H1 (cell line): ENCODE measurements at regions of chr18 and their contacts with region 1.

Region 1: DNA sequence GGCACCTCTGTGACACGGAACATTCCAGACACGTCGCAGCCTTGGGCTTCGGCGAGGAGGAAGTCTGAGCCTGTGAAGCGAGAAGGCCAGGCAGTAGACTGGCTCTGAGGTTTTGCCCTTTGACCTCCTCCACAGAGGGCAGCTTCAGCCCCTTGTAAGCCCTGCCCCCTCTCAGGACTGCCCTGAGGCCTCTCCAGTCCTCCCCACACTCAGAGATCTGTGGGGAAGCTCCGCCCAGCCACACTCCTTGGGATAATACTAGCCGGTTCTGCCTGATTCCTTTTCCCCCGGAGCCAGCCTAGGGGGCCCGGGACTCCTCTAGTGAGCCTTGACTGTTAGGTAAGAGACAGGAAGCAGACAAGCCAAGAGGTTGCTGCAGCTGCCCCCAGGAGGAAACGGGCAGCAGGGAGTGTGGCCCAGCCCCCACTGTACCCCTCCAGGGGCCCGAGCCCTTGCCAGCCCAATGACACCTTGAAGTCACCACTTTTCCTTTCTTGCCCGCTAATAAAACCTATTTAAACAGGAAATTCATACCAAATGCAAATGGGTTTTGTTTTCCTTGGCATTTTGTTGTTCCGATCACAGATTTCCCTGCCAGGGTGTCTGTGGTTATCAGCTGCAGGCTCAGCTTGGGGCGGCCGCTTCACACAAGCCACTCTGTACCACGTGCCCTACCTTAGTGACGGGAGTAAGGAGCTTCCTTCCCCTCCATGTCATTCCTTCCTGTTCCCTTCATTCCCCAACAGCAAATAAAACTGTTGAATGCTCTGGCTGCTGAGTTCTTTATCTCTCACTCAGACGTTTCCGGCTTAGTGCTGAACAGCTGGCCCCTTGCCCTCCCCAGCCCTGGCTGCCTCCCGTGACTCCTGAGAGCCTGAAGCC is 124.7 kb downstream of the CABLES1 start:
- DNase-seq: peak in 1 of 2 experiments; percentile 73
- H3K4me3 ChIP-seq: 0 out of 8 replicates have a peak overlapping the region, but pooled peaks of 2 of the 4 experiments have one; percentile 2 to 7
- H3K27ac ChIP-seq: peak overlapping the region; percentile 64
- H3K4me1 ChIP-seq: peaks cover 16 to 23% (median 19%) of the 10 kb centered on the region in 4 experiments
- H3K27me3 ChIP-seq: no peaks in the 10 kb centered on the region
- CTCF ChIP-seq: no peak
- EP300 ChIP-seq: peak in 1 of 2 experiments; percentile 18; a peak in 1 of 3 replicates
- POLR2A ChIP-seq: no peak; a peak in 1 of 3 replicates
- RAD21 ChIP-seq: peak in 1 of 2 experiments; percentile 14; a peak in 1 of 4 replicates

Region 2: DNA sequence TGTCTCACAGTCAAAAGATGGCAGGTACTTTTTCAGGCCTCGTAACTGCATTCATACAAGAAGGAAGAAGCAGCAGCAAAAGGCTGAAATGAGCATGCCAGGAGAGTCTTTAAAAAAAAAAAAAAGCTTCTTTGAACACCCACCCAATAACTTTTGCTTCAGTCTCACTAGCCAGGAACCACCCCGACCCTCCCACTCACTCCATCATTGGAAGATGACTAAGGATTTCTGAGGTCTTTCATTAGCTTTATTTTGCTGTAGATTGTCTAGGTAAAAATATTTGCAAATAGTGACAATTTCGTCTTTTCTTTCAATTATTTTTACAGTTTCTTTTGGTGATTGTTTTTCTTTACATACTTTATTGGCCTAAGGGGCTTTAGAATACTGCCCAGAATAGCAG is 288.9 kb before region 1 on chr18:
- CTCF ChIA-PET with region 1: no interaction called
- POLR2A ChIA-PET with region 1: no interaction called
- DNase-seq: no peak
- H3K4me3 ChIP-seq: no peak overlapping the region
- H3K27ac ChIP-seq: no peak overlapping the region
- H3K4me1 ChIP-seq: no peaks in the 10 kb centered on the region
- H3K27me3 ChIP-seq: no peaks in the 10 kb centered on the region
- CTCF ChIP-seq: no peak
- EP300 ChIP-seq: no peak
- POLR2A ChIP-seq: no peak
- RAD21 ChIP-seq: no peak

Region 3: GRCh38 chr18:23020555-23021294 is 239.2 kb before region 1 on chr18:
- CTCF ChIA-PET with region 1: no interaction called
- POLR2A ChIA-PET with region 1: no interaction called
- DNase-seq: no peak
- H3K4me3 ChIP-seq: no peak overlapping the region
- H3K27ac ChIP-seq: no peak overlapping the region
- H3K4me1 ChIP-seq: no peaks in the 10 kb centered on the region
- H3K27me3 ChIP-seq: no peaks in the 10 kb centered on the region
- CTCF ChIP-seq: no peak
- EP300 ChIP-seq: no peak
- POLR2A ChIP-seq: no peak
- RAD21 ChIP-seq: no peak

Region 4: DNA sequence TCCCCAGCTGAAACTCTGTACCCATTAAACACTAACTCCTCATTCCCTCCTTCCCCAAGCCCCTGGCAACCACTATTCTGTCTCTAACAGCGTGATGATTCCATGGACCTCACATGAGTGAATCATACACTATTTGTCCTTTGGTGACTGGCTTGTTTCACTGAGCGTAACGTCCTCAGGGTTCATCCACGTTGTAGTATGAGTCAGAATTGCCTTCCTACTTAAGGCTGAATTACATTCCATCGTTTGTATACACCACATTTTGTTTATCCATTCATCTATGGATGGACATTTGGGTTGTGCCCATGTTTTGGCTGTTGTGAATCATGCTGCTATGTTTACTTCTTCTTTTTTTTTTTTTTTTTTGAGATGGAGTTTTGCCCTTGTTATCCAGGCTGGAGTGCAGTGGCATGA is 144.3 kb before region 1 on chr18:
- CTCF ChIA-PET with region 1: no interaction called
- POLR2A ChIA-PET with region 1: no interaction called
- DNase-seq: no peak
- H3K4me3 ChIP-seq: no peak overlapping the region
- H3K27ac ChIP-seq: no peak overlapping the region
- H3K4me1 ChIP-seq: 0 out of 7 replicates have a peak, but pooled peaks cover 0 to 2% (median 0%) of the 10 kb centered on the region in 4 experiments
- H3K27me3 ChIP-seq: peaks cover 0 to 3% (median 0%) of the 10 kb centered on the region in 4 experiments; a peak in 1 of 7 replicates
- CTCF ChIP-seq: no peak
- EP300 ChIP-seq: no peak
- POLR2A ChIP-seq: no peak
- RAD21 ChIP-seq: no peak

Region 5: DNA sequence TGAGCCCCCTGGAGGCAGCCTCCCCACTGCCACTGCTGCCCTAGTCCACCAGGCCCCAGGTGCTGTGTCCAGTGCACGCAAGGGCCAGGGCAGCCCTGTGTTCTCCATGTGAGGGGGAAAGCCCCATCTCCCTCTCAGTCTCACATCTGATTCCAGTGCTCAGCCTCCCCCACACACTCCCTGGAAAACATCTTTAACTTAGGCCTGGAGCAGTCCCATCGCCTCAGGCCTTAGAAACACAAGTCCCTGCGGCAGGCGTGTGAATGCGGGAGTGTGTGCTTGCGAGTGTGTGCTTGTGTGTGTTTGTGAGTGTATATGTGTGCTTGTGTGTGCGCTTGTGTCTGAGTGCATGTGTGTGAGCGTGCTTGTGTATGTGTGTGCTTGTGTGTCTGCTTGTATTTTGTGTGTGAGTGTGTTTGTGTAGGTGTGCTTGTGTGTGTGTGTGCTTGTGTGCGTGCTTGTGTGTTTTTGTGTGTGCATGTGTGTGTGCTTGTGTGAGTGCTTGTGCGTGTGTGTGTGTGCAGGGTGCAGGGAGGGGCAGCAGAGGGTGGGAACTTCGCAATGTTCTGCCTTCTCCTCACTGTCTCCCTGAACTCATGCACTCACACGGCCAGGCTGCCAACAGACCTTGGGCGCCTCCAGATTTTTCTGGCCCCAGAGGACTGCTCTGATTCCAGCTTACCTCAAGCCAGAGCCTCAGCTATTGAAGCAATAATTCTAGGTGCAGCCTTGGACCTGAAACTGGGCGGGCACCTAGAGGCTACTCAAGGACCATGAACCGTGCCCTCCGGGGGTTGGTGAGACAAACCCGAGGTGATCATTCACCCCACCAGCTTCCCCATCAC is 14.9 kb after region 1 on chr18:
- CTCF ChIA-PET with region 1: interaction called, 18 read pairs
- POLR2A ChIA-PET with region 1: interaction called, 7 read pairs
- DNase-seq: no peak
- H3K4me3 ChIP-seq: no peak overlapping the region
- H3K27ac ChIP-seq: no peak overlapping the region
- H3K4me1 ChIP-seq: 0 out of 7 replicates have a peak, but pooled peaks cover 0 to 2% (median 0%) of the 10 kb centered on the region in 4 experiments
- H3K27me3 ChIP-seq: no peaks in the 10 kb centered on the region
- CTCF ChIP-seq: no peak
- EP300 ChIP-seq: no peak
- POLR2A ChIP-seq: no peak
- RAD21 ChIP-seq: no peak

Region 6: GRCh38 chr18:23283916-23284430 is 24.0 kb after region 1 on chr18:
- CTCF ChIA-PET with region 1: interaction called, 3 read pairs
- POLR2A ChIA-PET with region 1: interaction called, 10 read pairs
- DNase-seq: peak; percentile 57 to 69
- H3K4me3 ChIP-seq: peak overlapping the region in 1 of 4 experiments; percentile 13; a peak in 1 of 8 replicates
- H3K27ac ChIP-seq: peak overlapping the region; percentile 97
- H3K4me1 ChIP-seq: peaks cover 9 to 26% (median 17%) of the 10 kb centered on the region in 4 experiments
- H3K27me3 ChIP-seq: no peaks in the 10 kb centered on the region
- CTCF ChIP-seq: no peak
- EP300 ChIP-seq: peak in 1 of 2 experiments; percentile 87; a peak in 1 of 3 replicates
- POLR2A ChIP-seq: peak in 1 of 2 experiments; percentile 41; a peak in 1 of 3 replicates
- RAD21 ChIP-seq: no peak

Region 7: GRCh38 chr18:23398401-23398800 is 138.5 kb after region 1 on chr18:
- CTCF ChIA-PET with region 1: no interaction called
- POLR2A ChIA-PET with region 1: no interaction called
- DNase-seq: no peak
- H3K4me3 ChIP-seq: no peak overlapping the region
- H3K27ac ChIP-seq: no peak overlapping the region
- H3K4me1 ChIP-seq: peaks cover 7 to 10% (median 9%) of the 10 kb centered on the region in 4 experiments
- H3K27me3 ChIP-seq: no peaks in the 10 kb centered on the region
- CTCF ChIP-seq: no peak
- EP300 ChIP-seq: no peak
- POLR2A ChIP-seq: no peak
- RAD21 ChIP-seq: no peak